PC-9 (cell line): ENCODE measurements at regions of chr9 and their contacts with region 1.

Region 1: DNA sequence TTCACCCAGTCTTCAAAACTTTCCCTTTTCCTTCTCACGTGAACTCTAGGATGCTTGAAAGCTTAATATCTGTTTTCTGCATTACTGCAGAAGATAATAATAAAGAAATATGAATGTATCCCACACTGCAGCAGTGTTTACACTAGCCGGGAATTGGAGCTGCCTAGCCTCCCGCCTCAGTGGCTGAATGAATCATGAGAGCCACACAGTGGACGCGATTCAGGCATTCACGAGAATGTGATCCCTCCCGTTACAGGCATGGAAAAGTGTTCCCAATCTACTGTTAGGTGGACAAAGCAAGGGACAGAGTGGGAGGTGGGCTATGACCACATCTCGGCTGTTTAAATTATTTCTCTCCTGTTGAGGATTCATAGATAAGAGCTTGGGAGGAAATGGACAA is 69.4 kb upstream of the CTSL start:
- DNase-seq: no peak
- H3K4me3 ChIP-seq: no peak overlapping the region
- H3K27ac ChIP-seq: no peak overlapping the region
- H3K4me1 ChIP-seq: no peaks in the 10 kb centered on the region
- H3K27me3 ChIP-seq: no peaks in the 10 kb centered on the region
- CTCF ChIP-seq: no peak

Region 2: DNA sequence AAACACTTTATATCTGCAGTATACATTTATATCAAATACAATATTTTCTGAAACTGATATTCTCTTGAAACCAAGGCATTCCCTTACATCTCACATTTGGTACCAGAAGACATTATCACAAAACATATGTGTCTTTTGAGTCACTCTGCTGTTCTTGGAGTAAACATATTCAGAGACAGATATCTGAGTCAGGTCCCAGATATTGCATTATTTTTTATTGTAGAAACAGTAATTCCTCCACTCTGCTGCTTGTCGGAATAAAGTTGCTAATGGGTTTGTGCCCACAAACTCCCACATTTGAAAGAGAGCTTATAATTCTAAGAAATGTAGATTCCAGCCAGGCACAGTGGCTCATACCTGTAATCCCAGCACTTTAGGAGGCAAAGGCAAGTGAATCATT is 419.9 kb before region 1 on chr9:
- CTCF ChIA-PET with region 1: interaction called, 11 read pairs
- POLR2A ChIA-PET with region 1: no interaction called
- intact Hi-C with region 1: no loop called
- DNase-seq: no peak
- H3K4me3 ChIP-seq: no peak overlapping the region
- H3K27ac ChIP-seq: no peak overlapping the region
- H3K4me1 ChIP-seq: no peaks in the 10 kb centered on the region
- H3K27me3 ChIP-seq: no peaks in the 10 kb centered on the region
- CTCF ChIP-seq: no peak

Region 3: GRCh38 chr9:87342743-87343142 is 313.7 kb before region 1 on chr9:
- CTCF ChIA-PET with region 1: no interaction called
- POLR2A ChIA-PET with region 1: no interaction called
- intact Hi-C with region 1: no loop called
- DNase-seq: no peak
- H3K4me3 ChIP-seq: no peak overlapping the region
- H3K27ac ChIP-seq: no peak overlapping the region
- H3K4me1 ChIP-seq: peaks cover 8% of the 10 kb centered on the region
- H3K27me3 ChIP-seq: no peaks in the 10 kb centered on the region
- CTCF ChIP-seq: no peak

Region 4: GRCh38 chr9:87395804-87396479 is 260.5 kb before region 1 on chr9:
- CTCF ChIA-PET with region 1: no interaction called
- POLR2A ChIA-PET with region 1: no interaction called
- intact Hi-C with region 1: no loop called
- DNase-seq: no peak
- H3K4me3 ChIP-seq: no peak overlapping the region
- H3K27ac ChIP-seq: no peak overlapping the region
- H3K4me1 ChIP-seq: no peaks in the 10 kb centered on the region
- H3K27me3 ChIP-seq: no peaks in the 10 kb centered on the region
- CTCF ChIP-seq: no peak

Region 5: DNA sequence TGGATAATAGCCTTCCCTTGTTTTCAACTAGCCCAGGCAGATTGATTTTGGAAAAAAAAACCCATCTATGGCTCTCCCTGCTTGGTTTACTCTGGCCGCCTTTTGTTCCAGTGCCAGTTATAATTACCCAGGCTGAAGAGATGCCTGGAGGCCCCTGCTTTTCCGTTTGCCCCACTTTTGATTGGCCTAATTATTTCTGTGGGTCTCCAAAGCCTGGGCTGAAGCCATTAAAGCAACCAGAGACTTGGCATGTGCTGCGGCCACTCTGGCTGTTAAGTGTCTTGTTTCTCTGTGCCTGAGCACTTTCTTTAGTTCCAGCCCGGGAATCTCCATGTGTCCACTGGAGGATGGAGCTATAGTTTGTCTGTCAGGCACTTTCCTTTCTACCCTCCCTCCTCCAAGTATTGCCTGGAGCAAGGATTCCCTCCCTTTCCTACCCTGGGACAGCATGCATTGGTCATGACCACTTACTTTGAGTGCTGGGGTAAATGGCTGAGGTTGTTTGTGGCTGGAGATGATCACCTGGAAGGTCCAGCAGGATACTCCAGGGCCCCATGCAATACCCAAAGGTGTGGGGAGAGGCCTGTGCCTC is 35.7 kb before region 1 on chr9:
- CTCF ChIA-PET with region 1: no interaction called
- POLR2A ChIA-PET with region 1: no interaction called
- intact Hi-C with region 1: no loop called
- DNase-seq: no peak
- H3K4me3 ChIP-seq: no peak overlapping the region
- H3K27ac ChIP-seq: no peak overlapping the region
- H3K4me1 ChIP-seq: peaks cover 14% of the 10 kb centered on the region
- H3K27me3 ChIP-seq: no peaks in the 10 kb centered on the region
- CTCF ChIP-seq: no peak